ENCODE measurements at regions of chr3 and their contacts with region 1.

Region 1: DNA sequence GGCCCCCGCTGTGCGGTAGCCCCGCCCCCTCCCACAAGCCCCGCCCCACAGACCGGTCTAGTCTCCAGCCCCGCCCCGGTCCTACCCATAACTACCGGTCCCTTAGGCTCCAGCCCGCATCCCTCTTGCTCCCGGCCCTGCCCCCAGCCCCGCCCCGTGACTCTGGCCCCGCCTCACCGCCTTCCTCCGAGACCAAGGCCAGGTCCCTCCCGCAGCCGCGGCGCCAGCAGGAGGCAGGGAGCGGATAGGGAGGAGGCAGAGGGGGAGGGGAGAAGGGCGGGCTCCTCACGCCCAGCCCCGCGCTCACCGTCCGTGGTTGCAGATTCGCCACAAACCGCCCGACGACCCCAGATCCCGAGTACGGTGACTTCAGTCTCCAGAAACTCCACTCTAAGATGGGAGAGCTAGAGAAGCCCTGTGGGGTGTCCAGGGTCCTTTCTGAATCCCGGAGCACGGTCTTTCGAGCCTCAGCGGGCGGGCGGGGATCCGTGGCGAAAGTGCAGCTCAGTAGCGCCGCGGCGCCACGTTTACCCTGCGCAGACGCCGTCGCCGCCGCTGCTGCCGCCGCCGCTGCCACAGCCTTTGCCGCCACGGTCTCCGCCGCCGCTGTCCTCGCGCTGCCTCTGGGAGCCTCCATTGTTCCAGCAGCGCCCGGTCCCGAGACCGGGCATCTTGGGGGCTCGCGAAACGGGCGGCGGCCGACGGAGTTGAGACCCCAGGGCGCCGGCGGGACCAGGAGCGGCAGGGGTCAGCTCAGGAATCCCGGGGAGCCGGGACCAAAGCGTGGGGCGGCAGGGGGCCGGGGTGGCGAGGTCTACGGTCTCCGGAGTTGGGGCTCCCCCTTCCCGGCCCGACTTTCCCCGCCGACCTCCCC is at the start of gene BRPF1:
- DNase-seq: peak; percentile 96
- H3K4me3 Mint-ChIP-seq: peak within 1 kb of the TSS; percentile 96
- H3K27ac Mint-ChIP-seq: peak within 1 kb of the TSS; percentile 94
- H3K4me1 Mint-ChIP-seq: peaks cover 58% of the 10 kb centered on the region
- H3K27me3 Mint-ChIP-seq: no peaks in the 10 kb centered on the region
- total RNA-seq, gene BRPF1: 44.6 and 45.9 TPM in 2 replicates

Region 2: GRCh38 chr3:9352917-9353752 is 378.3 kb before region 1 on chr3:
- intact Hi-C with region 1: loop called (anchors 1 kb)
- DNase-seq: peak; percentile 39
- H3K4me3 Mint-ChIP-seq: no peak overlapping the region
- H3K27ac Mint-ChIP-seq: no peak overlapping the region
- H3K4me1 Mint-ChIP-seq: peaks cover 20% of the 10 kb centered on the region
- H3K27me3 Mint-ChIP-seq: no peaks in the 10 kb centered on the region

Region 3: GRCh38 chr3:9503283-9503682 is 228.2 kb before region 1 on chr3:
- intact Hi-C with region 1: loop called (anchors 1 kb)
- DNase-seq: peak; percentile 57
- H3K4me3 Mint-ChIP-seq: no peak overlapping the region
- H3K27ac Mint-ChIP-seq: no peak overlapping the region
- H3K4me1 Mint-ChIP-seq: no peaks in the 10 kb centered on the region
- H3K27me3 Mint-ChIP-seq: peaks cover 26% of the 10 kb centered on the region

Region 4: DNA sequence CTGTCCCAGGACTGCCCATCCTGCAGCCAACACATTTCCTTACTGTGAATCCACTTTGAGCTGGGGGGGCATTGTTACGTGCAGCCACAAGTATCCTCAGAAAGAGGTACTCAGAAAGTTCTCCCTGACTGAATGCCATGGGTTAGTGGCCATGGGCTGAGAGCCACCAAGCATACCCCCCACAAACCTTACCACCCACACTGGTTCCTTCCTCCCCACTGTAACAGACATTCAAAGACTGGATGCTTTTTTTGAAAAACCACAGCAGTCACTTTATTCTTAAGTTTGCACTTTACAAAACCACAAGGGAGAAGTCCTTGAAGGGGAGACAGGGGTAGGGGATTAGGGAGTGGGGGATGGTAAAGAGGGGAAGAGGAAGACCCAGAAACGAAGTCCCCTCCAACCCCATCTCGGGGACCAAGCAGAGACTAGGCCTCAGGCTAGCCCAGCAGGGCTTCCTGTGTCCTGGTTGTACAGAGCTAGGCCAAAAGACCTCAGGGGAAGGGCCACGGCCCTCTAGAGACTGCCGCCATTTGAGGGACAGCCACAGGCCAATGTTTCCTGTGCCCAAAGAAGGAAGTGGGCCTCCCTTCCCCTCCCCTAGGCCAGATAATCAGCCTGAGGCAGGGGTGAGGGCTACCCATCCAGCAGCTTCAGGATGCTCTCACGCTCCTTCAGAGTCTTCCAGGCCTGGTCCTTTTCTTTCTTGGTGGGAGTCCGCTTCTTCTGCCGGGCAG is 48.4 kb after region 1 on chr3:
- intact Hi-C with region 1: loop called (anchors 1 kb)
- DNase-seq: peak; percentile 23
- H3K4me3 Mint-ChIP-seq: peak overlapping the region; percentile 31
- H3K27ac Mint-ChIP-seq: peak overlapping the region; percentile 90
- H3K4me1 Mint-ChIP-seq: peaks cover 55% of the 10 kb centered on the region
- H3K27me3 Mint-ChIP-seq: no peaks in the 10 kb centered on the region

Region 5: DNA sequence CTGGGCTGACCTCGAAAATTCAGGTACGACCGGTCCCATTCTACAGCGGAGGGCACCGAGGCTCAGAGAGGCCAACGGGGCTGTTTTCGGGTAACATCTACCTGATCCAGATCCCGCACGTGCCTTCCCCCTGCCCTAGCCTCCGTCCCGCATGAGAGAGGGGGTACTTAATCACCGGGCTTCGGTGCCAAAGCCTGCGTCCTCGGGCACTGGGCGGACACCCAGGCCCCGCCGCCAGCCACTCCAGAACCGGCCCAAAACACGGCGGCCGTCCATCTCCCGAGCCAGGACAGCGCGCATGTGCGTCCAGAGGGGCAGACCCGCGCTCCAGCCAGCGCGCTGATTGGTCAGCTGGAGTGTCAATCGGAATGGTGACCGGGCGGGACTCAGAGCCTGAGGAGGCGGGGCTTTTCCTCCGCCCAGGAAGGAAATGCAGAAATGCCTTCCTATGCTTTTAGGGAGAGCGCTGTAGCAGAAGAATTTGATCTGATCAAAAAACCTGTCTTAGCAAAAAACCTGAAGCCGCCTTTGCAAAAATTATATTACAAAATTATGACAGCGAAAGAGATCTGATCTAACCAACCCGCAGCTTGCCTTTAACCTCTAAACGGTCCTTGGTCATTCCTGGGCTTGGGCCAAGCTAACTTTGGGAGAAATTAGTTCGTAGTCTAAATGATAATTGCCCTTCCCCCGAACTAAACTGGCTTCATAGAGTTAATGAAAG is 112.4 kb after region 1 on chr3 and contains the start of gene RPUSD3:
- intact Hi-C with region 1: loop called (anchors 1 kb)
- DNase-seq: peak; percentile 95
- H3K4me3 Mint-ChIP-seq: peak within 1 kb of the TSS; percentile 98
- H3K27ac Mint-ChIP-seq: peak within 1 kb of the TSS; percentile 91
- H3K4me1 Mint-ChIP-seq: peaks cover 28% of the 10 kb centered on the region
- H3K27me3 Mint-ChIP-seq: no peaks in the 10 kb centered on the region
- total RNA-seq, gene RPUSD3: 79.2 and 79.5 TPM in 2 replicates

Region 6: DNA sequence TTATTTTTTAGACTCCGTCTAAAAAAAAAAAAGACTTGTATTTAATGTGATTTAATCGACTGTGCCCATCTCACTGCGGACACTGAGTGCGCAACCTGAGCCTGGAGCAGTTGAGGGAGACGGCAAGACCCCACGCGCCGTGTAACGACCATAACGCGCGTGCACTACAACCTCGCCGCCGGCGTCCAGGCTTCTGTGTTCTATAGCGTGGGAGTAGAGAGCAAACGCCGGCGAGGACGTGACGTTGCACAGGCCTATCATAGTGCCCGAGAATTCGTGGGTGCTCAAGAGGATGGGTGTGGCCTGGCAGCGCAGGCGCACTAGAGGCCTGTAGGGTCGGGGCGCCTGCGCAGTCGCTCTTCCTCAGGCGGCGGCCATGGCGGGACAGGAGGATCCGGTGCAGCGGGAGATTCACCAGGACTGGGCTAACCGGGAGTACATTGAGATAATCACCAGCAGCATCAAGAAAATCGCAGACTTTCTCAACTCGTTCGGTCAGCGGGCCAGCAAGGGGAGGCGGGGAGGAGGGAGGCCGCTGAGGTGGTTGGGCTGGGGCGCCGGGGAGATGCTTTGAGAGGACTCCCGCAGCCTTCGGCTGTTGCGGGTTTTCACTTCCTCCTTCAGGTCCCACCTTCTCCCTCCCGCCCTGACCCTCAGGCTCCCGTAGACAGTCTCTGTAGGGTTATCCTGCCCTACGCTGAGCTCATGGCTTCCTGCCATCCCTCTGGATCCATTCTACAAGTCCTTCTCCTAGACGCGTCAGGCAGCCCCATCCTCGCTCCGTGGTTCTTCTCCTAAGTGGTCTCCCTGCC is 384.1 kb after region 1 on chr3 and contains the start of gene BRK1:
- intact Hi-C with region 1: loop called (anchors 2 kb)
- DNase-seq: peak; percentile 90
- H3K4me3 Mint-ChIP-seq: peak within 1 kb of the TSS; percentile 99
- H3K27ac Mint-ChIP-seq: peak within 1 kb of the TSS; percentile 96
- H3K4me1 Mint-ChIP-seq: peaks cover 31% of the 10 kb centered on the region
- H3K27me3 Mint-ChIP-seq: peaks cover 2% of the 10 kb centered on the region
- total RNA-seq, gene BRK1: 97.2 and 105 TPM in 2 replicates

Measured in activated T-helper 1 cell treated with anti-CD3 and anti-CD28 coated beads, Interleukin-12 subunit alpha, Interleukin-12 subunit beta, Interleukin-2, Interleukin-4 antibody, amounts not matched to agents 30 ng/mL and 10 ng/mL and 1 ng/mL, durations not matched to agents 14 hours and 24 hours and 36 hours (primary cell).